IMR-90 (cell line): ENCODE measurements at regions of chr22 and their contacts with region 1.

Region 1: DNA sequence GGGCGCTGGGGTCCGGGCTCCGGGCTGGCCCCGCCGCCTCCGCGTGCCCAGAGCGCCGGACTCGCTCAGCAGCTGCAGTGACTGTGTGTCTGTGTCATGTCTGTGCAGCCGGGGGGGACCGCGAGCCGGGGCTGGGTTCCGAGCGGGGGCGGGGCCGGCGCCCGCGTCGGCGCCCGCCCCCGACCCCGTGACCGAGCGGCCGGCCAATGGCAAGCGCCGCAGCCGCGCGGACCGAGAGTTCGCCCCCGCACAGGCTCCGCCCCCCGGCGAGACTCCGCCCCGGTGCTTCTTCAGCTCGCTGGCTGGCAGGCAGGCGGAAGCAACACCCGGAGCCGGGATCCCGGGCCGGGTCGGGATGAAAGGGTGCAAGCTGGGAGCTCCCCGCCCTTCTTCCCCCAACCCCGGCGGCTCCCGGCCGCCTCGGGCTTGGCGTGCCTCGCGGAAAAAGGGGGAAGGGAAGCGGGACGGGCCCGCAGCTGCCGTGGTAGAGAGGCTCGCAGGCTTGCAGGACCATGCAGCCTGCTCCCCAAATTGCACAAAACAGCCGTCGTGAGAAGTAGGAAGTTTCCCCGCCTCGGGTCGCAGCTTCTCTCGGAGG is 750 bp upstream of the LARGE1 start:
- DNase-seq: peak; percentile 94
- ATAC-seq: peak; percentile 85
- H3K4me3 ChIP-seq: peak overlapping the region; percentile 86
- H3K27ac ChIP-seq: peak overlapping the region; percentile 75
- H3K4me1 ChIP-seq: no peaks in the 10 kb centered on the region
- H3K27me3 ChIP-seq: no peaks in the 10 kb centered on the region
- CTCF ChIP-seq: no peak
- POLR2A ChIP-seq: peak; percentile 80
- RAD21 ChIP-seq: no peak

Region 2: DNA sequence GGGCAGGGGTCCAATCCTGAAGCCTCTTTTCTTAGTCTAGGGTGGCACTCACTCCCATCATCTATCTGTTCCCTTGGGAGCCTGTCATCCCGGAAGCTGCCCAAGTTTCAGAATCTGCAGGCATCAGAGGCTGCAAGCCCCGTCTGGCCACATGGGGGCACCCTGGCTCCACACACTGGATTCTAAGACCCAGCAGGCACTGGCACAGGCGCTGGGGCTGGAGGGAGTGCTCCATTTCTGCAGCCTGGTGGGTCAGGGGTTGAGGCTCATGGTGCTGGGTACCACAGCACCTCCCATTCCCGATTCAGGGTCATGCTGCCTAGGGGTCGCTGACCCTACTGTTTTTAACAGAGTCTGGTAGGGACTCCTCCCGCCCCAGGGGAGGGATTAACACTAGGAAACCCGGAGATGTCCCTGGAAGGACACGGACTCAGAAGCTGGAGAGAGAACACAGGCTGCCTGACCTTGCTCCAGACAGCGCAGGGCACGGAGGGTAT is 618.9 kb before region 1 on chr22:
- CTCF ChIA-PET with region 1: interaction called, 4 read pairs
- POLR2A ChIA-PET with region 1: no interaction called
- dilution Hi-C with region 1: no loop called
- in situ Hi-C with region 1: loop called (anchors 10 kb)
- intact Hi-C with region 1: loop called (anchors 1 kb)
- DNase-seq: peak; percentile 60
- ATAC-seq: peak; percentile 99
- H3K4me3 ChIP-seq: no peak overlapping the region
- H3K27ac ChIP-seq: no peak overlapping the region
- H3K4me1 ChIP-seq: no peaks in the 10 kb centered on the region
- H3K27me3 ChIP-seq: no peaks in the 10 kb centered on the region
- CTCF ChIP-seq: peak; percentile 96
- POLR2A ChIP-seq: peak; percentile 65
- RAD21 ChIP-seq: peak; percentile 99

Region 3: GRCh38 chr22:33579448-33580093 is 341.5 kb before region 1 on chr22:
- CTCF ChIA-PET with region 1: interaction called, 5 read pairs
- POLR2A ChIA-PET with region 1: no interaction called
- dilution Hi-C with region 1: no loop called
- in situ Hi-C with region 1: no loop called
- intact Hi-C with region 1: loop called (anchors 1 kb)
- DNase-seq: peak; percentile 38
- ATAC-seq: peak; percentile 99
- H3K4me3 ChIP-seq: no peak overlapping the region
- H3K27ac ChIP-seq: no peak overlapping the region
- H3K4me1 ChIP-seq: no peaks in the 10 kb centered on the region
- H3K27me3 ChIP-seq: no peaks in the 10 kb centered on the region
- CTCF ChIP-seq: peak; percentile 80
- POLR2A ChIP-seq: no peak
- RAD21 ChIP-seq: peak; percentile 74

Region 4: DNA sequence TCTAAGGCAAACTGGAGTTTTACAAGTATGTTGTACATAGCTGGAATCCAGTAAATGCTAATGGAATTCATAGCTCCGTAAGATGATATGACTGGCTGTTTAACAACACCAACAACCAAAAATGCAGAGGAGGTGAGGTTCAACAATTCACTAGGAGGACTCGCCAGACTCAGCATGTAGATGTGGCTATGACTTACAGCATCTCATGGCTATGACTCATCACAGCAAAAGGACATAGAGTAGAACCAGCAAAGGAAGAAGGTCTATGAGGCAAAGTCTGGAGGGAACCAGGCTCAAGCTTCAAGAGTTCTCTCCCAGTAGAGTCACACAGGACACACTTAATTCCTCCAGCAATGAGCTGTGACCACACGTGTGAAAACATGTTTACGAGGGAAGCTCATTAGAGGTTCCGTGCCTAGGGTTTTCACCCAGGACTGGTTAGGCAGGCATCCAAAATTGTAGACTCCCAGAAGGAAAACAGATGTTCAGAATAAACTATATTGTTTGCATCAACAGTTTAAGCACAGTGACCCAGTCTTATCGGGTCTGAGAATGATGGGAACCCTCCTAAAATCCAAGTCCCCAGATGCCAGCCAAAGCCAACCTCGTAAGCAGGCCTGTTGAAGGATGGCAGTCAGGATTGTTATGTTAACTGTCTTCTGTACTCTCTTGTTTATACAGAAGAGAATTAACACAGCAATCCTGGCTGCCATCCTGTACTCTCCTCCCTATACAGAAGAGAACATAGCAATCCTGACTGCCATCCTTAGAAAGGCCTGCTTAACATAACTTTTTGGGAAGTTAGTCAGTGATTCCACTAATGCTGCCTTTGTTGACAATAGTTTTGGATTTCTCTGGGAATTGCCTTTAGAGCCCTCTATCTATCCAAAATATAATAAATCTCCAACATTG is 117.4 kb before region 1 on chr22:
- CTCF ChIA-PET with region 1: no interaction called
- POLR2A ChIA-PET with region 1: no interaction called
- dilution Hi-C with region 1: no loop called
- in situ Hi-C with region 1: no loop called
- intact Hi-C with region 1: loop called (anchors 5 kb)
- DNase-seq: peak; percentile 98
- ATAC-seq: peak; percentile 96
- H3K4me3 ChIP-seq: no peak overlapping the region
- H3K27ac ChIP-seq: peak overlapping the region; percentile 96; the same call in 1 of the 2 replicates
- H3K4me1 ChIP-seq: peaks cover 9% of the 10 kb centered on the region
- H3K27me3 ChIP-seq: no peaks in the 10 kb centered on the region
- CTCF ChIP-seq: no peak
- POLR2A ChIP-seq: no peak
- RAD21 ChIP-seq: no peak; the same call in 1 of the 2 replicates

Region 5: DNA sequence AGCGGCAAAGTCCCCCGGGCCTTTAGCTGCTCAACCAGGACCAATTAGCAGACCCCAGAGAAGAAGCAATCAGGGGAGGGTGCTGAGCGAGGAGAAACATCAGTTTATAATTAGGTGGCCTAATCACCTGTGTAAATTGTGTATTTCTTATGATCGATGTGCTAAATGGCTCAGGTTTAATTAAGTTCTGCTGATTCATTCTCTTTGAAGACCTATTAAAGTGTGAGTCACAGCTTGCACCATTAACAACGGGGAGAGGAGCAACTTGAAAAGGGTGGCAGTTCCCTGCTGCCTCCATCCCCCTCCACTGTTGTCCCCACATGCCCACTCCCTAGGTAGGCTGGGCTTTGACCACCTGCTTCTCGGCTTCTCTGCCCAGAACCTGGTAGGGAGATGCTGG is 1155.6 kb after region 1 on chr22:
- CTCF ChIA-PET with region 1: interaction called, 10 read pairs
- POLR2A ChIA-PET with region 1: no interaction called
- dilution Hi-C with region 1: no loop called
- in situ Hi-C with region 1: no loop called
- intact Hi-C with region 1: no loop called
- DNase-seq: no peak
- ATAC-seq: no peak
- H3K4me3 ChIP-seq: no peak overlapping the region
- H3K27ac ChIP-seq: no peak overlapping the region
- H3K4me1 ChIP-seq: no peaks in the 10 kb centered on the region
- H3K27me3 ChIP-seq: no peaks in the 10 kb centered on the region
- CTCF ChIP-seq: no peak
- POLR2A ChIP-seq: no peak
- RAD21 ChIP-seq: no peak

Region 6: DNA sequence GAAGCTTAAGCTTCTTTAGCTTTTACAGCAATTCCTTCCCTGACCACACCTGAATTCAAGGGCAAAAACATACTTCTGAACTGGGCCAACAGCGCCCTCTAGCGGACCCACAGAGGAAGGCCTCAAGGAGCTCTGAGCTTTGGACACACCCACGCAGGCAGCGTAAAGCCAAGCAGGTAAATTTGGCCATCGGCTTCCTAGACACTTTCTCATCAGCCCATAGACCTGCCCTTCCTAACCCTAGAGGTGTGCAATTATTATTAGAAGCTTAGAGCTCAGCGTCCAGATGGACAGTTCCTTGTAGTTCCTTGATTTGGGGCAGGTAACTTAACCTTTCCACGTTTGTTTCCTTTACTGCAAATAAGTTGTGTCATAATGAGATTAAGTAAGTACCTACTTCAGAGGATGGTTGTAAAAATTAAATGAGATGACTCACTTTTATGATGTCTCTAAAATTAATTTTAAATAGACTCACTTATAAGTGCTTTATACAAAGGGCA is 1310.6 kb after region 1 on chr22:
- CTCF ChIA-PET with region 1: interaction called, 3 read pairs
- POLR2A ChIA-PET with region 1: no interaction called
- dilution Hi-C with region 1: no loop called
- in situ Hi-C with region 1: no loop called
- intact Hi-C with region 1: loop called (anchors 2 kb)
- DNase-seq: peak; percentile 55
- ATAC-seq: peak; percentile 82
- H3K4me3 ChIP-seq: no peak overlapping the region
- H3K27ac ChIP-seq: no peak overlapping the region
- H3K4me1 ChIP-seq: no peaks in the 10 kb centered on the region
- H3K27me3 ChIP-seq: peaks cover 19% of the 10 kb centered on the region
- CTCF ChIP-seq: peak; percentile 75
- POLR2A ChIP-seq: no peak
- RAD21 ChIP-seq: peak; percentile 71